MCF 10A (cell line): ENCODE measurements at regions of chr19 and their contacts with region 1.

Region 1: DNA sequence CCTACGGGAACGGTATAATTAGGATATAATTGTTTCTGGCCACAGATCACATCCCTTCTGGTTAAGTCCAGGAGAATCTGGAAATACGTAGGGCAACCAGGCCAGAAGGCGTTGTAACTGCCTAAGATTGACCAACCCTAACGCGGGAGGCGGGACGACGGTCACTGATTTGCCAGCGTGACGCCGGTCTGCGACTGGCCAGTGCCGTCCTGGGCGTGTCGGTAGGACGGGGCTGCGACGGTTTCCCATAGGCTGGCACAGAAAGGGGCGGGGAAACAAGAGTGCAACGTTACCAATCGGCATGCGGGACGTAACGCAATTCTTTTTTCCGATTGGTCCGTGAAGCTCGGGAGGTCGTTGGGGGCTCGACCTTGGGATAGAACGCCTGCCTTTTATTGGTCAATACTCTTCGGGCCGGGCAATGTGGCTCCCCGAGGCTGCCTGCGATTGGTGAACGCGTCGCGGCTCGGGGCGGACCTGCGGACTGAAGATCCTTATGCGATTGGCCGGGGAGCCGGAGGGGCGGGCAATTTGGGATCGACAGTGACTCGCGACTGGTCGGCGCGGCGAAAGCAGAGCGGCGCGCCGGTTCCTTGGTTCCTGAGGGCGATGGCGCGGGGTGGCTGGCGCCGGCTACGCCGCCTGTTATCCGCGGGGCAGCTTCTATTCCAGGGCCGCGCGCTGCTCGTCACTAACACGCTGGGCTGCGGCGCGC is at the start of gene MPV17L2:
- DNase-seq: peak; percentile 100
- H3K4me3 Mint-ChIP-seq: peak within 1 kb of the TSS; percentile 78
- H3K27ac Mint-ChIP-seq: peak within 1 kb of the TSS; percentile 72
- H3K4me1 Mint-ChIP-seq: peaks cover 12% of the 10 kb centered on the region
- H3K27me3 Mint-ChIP-seq: no peaks in the 10 kb centered on the region
- CTCF ChIP-seq: no peak
- total RNA-seq, gene MPV17L2: 12.9 and 15.4 TPM in 2 replicates

Region 2: GRCh38 chr19:18074190-18074589 is 118.6 kb before region 1 on chr19:
- CTCF ChIA-PET with region 1: no interaction called
- POLR2A ChIA-PET with region 1: no interaction called
- intact Hi-C with region 1: no loop called
- DNase-seq: no peak
- H3K4me3 Mint-ChIP-seq: no peak overlapping the region
- H3K27ac Mint-ChIP-seq: no peak overlapping the region
- H3K4me1 Mint-ChIP-seq: no peaks in the 10 kb centered on the region
- H3K27me3 Mint-ChIP-seq: no peaks in the 10 kb centered on the region
- CTCF ChIP-seq: no peak

Region 3: GRCh38 chr19:18109733-18110595 is 82.9 kb before region 1 on chr19:
- CTCF ChIA-PET with region 1: interaction called, 6 read pairs
- POLR2A ChIA-PET with region 1: interaction called, 10 read pairs
- intact Hi-C with region 1: no loop called
- DNase-seq: peak; percentile 41
- H3K4me3 Mint-ChIP-seq: peak overlapping the region; percentile 68
- H3K27ac Mint-ChIP-seq: no peak overlapping the region
- H3K4me1 Mint-ChIP-seq: peaks cover 15% of the 10 kb centered on the region
- H3K27me3 Mint-ChIP-seq: no peaks in the 10 kb centered on the region
- CTCF ChIP-seq: no peak

Region 4: GRCh38 chr19:18160971-18161635 is 31.7 kb before region 1 on chr19:
- CTCF ChIA-PET with region 1: interaction called, 3 read pairs
- POLR2A ChIA-PET with region 1: interaction called, 16 read pairs
- intact Hi-C with region 1: no loop called
- DNase-seq: peak; percentile 69
- H3K4me3 Mint-ChIP-seq: peak overlapping the region; percentile 52
- H3K27ac Mint-ChIP-seq: peak overlapping the region; percentile 25
- H3K4me1 Mint-ChIP-seq: peaks cover 18% of the 10 kb centered on the region
- H3K27me3 Mint-ChIP-seq: no peaks in the 10 kb centered on the region
- CTCF ChIP-seq: peak; percentile 57

Region 5: GRCh38 chr19:18179957-18180356 is 12.9 kb before region 1 on chr19:
- CTCF ChIA-PET with region 1: interaction called, 9 read pairs
- POLR2A ChIA-PET with region 1: interaction called, 35 read pairs
- intact Hi-C with region 1: no loop called
- DNase-seq: no peak
- H3K4me3 Mint-ChIP-seq: no peak overlapping the region
- H3K27ac Mint-ChIP-seq: no peak overlapping the region
- H3K4me1 Mint-ChIP-seq: no peaks in the 10 kb centered on the region
- H3K27me3 Mint-ChIP-seq: no peaks in the 10 kb centered on the region
- CTCF ChIP-seq: no peak

Region 6: DNA sequence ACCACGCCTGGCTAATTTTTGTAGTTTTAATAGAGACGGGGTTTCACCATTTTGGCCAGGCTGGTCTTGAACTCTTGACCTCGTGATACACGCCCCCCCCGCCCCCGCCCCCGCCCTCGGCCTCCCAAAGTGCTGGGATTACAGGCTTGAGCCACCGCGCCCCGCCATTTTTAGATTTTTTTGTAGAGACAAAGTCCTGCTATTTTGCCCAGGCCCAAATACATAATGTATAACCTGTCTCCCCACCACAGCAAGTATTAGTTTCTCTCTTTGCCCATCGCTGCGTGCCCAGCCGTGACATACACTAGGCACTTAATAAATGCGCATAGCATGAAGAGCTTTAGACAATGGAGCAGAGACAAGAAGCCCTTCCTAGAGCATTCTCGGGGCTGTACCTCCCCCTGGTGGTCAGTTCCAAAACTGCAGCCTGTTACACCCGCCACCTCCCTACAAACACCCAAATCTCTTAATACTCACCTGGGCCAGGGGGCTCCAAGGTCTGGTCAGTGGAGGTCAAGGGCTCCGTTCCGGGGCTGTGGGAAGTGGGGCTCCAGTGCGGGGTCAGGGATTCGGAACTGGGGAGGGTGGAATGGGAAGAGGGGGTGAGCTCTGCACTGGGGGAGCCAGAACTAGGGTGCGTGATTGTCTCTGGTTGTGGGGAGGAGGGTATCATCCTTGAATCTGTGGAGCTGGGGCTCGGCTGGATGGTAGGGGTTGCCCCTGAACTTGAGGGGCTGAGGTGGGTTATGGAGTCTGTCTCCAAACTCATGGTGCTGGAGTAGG is 58.9 kb after region 1 on chr19:
- CTCF ChIA-PET with region 1: interaction called, 23 read pairs
- POLR2A ChIA-PET with region 1: interaction called, 34 read pairs
- intact Hi-C with region 1: loop called (anchors 1 kb)
- DNase-seq: peak; percentile 76
- H3K4me3 Mint-ChIP-seq: no peak overlapping the region
- H3K27ac Mint-ChIP-seq: no peak overlapping the region
- H3K4me1 Mint-ChIP-seq: no peaks in the 10 kb centered on the region
- H3K27me3 Mint-ChIP-seq: no peaks in the 10 kb centered on the region
- CTCF ChIP-seq: peak; percentile 89

Region 7: GRCh38 chr19:18291590-18292461 is 99.0 kb after region 1 on chr19:
- CTCF ChIA-PET with region 1: interaction called, 3 read pairs
- POLR2A ChIA-PET with region 1: interaction called, 15 read pairs
- intact Hi-C with region 1: no loop called
- DNase-seq: peak; percentile 70
- H3K4me3 Mint-ChIP-seq: peak overlapping the region; percentile 78
- H3K27ac Mint-ChIP-seq: peak overlapping the region; percentile 97
- H3K4me1 Mint-ChIP-seq: peaks cover 19% of the 10 kb centered on the region
- H3K27me3 Mint-ChIP-seq: no peaks in the 10 kb centered on the region
- CTCF ChIP-seq: no peak

Region 8: DNA sequence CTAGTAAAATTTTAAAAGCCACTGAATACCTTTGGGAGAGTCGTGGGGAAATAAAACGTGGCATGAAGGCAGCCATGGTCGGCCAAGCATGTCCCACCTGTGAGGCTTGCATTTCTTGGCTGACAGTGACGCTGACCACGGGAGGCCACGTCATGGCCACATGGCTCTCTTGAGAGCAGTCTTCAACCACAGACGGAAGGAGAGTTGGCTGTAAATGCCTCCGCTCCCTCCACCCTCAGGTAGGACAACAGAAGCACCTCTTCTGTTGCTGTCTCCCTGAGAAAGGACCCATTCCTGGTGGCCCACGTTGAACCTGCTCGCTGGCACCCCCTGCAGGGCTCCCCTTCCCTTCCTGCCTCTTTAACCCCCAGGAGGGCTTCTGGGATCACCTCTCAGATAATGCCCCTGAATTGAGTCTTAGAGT is 215.2 kb after region 1 on chr19:
- CTCF ChIA-PET with region 1: interaction called, 5 read pairs
- POLR2A ChIA-PET with region 1: no interaction called
- intact Hi-C with region 1: loop called (anchors 2 kb)
- DNase-seq: no peak
- H3K4me3 Mint-ChIP-seq: no peak overlapping the region
- H3K27ac Mint-ChIP-seq: no peak overlapping the region
- H3K4me1 Mint-ChIP-seq: peaks cover 6% of the 10 kb centered on the region
- H3K27me3 Mint-ChIP-seq: no peaks in the 10 kb centered on the region
- CTCF ChIP-seq: no peak